Activated B cell treated with CpG ODN at 0.5 μM for 24 hours (primary cell): ENCODE measurements at regions of chr10 and their contacts with region 1.

Region 1: GRCh38 chr10:110252151-110252550 is 44.7 kb downstream of the MXI1 start:
- DNase-seq: no peak
- ATAC-seq: no peak
- H3K4me3 Mint-ChIP-seq: no peak overlapping the region
- H3K27ac Mint-ChIP-seq: no peak overlapping the region
- H3K4me1 Mint-ChIP-seq: no peaks in the 10 kb centered on the region
- H3K27me3 Mint-ChIP-seq: no peaks in the 10 kb centered on the region
- CTCF ChIP-seq: no peak

Region 2: DNA sequence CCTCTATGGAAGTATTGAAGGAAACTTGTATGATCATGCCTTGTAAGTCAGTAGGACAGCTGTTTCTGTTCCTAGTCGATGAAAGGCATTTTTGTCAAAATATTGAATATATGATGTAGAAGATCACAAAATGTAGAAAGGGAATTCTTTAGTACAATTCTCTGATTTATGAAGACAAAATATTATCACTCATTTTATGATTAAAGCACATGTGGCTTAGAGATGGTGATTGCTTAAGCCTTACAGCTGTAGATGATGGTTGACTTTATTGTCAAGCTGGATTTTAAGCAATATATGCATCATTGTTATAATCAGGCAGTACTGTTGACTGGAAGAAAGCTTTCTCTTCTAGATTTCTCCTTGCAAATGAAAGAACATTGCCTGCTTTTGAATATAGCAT is 18.3 kb before region 1 on chr10:
- CTCF ChIA-PET with region 1: no interaction called
- POLR2A ChIA-PET with region 1: no interaction called
- intact Hi-C with region 1: loop called (anchors 2 kb)
- DNase-seq: no peak
- ATAC-seq: no peak
- H3K4me3 Mint-ChIP-seq: no peak overlapping the region
- H3K27ac Mint-ChIP-seq: no peak overlapping the region
- H3K4me1 Mint-ChIP-seq: peaks cover under 1% of the 10 kb centered on the region
- H3K27me3 Mint-ChIP-seq: no peaks in the 10 kb centered on the region
- CTCF ChIP-seq: no peak